ENCODE measurements at regions of chr3 and their contacts with region 1.

Region 1: DNA sequence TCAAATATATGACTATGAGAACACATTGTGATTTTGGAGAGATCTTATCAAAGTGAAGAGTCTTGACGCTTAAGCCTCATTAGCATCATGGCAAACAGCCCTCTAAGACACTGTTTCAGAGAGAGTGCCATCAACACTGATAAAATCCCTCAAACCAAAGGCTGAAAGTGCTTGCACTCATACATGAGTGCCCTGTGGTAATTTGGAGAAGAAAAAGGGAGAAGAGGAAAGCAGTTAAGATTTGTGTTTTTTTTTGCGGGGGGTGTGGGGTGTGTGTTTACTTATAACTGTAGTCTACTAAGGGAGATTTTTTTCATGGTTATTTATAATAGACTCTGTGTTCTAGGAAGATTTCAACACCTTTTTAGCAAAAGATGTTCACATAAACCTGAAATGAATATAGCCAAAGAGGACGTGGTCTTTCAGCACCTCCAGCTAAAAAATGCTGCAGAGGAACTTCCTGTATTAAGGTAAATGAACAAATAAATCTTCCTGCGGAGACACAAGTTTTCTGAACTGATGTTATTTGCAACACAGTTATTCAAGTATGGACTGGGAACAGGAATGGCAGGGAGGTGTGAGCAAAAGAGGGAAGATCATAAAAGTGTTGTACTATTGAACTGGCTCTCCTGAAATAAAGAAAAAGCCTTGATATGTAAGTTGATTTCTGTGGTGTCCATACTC is 81.9 kb upstream of the TGFBR2 start:
- DNase-seq: no peak
- ATAC-seq: peak in 1 of 2 donors; percentile 56
- H3K4me3 ChIP-seq: no peak overlapping the region
- H3K27ac ChIP-seq: no peak overlapping the region
- H3K4me1 ChIP-seq: peaks cover 5% of the 10 kb centered on the region
- H3K27me3 ChIP-seq: no peaks in the 10 kb centered on the region

Region 2: DNA sequence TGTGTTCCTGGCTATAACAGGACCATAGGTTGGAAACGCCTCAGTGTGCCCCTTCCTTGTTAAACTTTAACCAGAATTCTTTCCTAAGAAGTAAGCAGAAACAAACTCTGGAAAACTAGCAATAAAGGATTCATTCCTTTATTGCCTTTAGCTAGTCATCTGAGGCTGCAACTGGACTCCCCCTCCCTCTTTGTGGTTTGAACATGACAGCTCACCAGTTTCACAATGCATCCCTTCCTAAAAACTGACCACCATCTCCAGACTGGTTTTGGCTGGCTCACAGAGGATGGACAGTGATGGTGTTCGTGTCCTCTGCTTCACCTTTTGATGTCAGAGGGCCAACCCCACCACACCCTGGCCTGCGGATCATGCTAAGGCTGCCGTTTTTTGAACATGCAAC is 54.0 kb after region 1 on chr3:
- intact Hi-C with region 1: loop called in 2 of 4 experiments (anchors 10 kb)
- DNase-seq: peak; percentile 25 to 48 (median 37)
- ATAC-seq: peak; percentile 67 to 69
- H3K4me3 ChIP-seq: no peak overlapping the region
- H3K27ac ChIP-seq: no peak overlapping the region
- H3K4me1 ChIP-seq: peaks cover 2% of the 10 kb centered on the region
- H3K27me3 ChIP-seq: no peaks in the 10 kb centered on the region

Region 3: GRCh38 chr3:30586096-30586805 is 61.8 kb after region 1 on chr3:
- intact Hi-C with region 1: loop called in 1 of 4 experiments (anchors 10 kb)
- DNase-seq: no peak
- ATAC-seq: peak in 1 of 2 donors; percentile 45
- H3K4me3 ChIP-seq: no peak overlapping the region
- H3K27ac ChIP-seq: peak overlapping the region; percentile 50
- H3K4me1 ChIP-seq: peaks cover 4% of the 10 kb centered on the region
- H3K27me3 ChIP-seq: no peaks in the 10 kb centered on the region

Region 4: GRCh38 chr3:30606301-30607031 is 82.0 kb after region 1 on chr3 and contains the start of gene TGFBR2:
- intact Hi-C with region 1: loop called in 1 of 4 experiments (anchors 10 kb)
- DNase-seq: peak; percentile 97 to 98 (median 98)
- ATAC-seq: peak; percentile 98
- H3K4me3 ChIP-seq: peak within 1 kb of the TSS; percentile 94
- H3K27ac ChIP-seq: peak within 1 kb of the TSS; percentile 98
- H3K4me1 ChIP-seq: peaks cover 5% of the 10 kb centered on the region
- H3K27me3 ChIP-seq: no peaks in the 10 kb centered on the region
- total RNA-seq, gene TGFBR2: 196 to 255 (median 212) TPM

Measured in right cardiac atrium (tissue), 5 donors.